Endothelial cell of umbilical vein (primary cell): ENCODE measurements at regions of chr4 and their contacts with region 1.

Region 1: GRCh38 chr4:168472920-168473319 is 7.4 kb downstream of the DDX60L start:
- DNase-seq: no peak
- H3K4me3 ChIP-seq: no peak overlapping the region
- H3K27ac ChIP-seq: no peak overlapping the region
- H3K4me1 ChIP-seq: peaks cover 7% of the 10 kb centered on the region
- H3K27me3 ChIP-seq: no peaks in the 10 kb centered on the region
- CTCF ChIP-seq: no peak
- POLR2A ChIP-seq: no peak

Region 2: DNA sequence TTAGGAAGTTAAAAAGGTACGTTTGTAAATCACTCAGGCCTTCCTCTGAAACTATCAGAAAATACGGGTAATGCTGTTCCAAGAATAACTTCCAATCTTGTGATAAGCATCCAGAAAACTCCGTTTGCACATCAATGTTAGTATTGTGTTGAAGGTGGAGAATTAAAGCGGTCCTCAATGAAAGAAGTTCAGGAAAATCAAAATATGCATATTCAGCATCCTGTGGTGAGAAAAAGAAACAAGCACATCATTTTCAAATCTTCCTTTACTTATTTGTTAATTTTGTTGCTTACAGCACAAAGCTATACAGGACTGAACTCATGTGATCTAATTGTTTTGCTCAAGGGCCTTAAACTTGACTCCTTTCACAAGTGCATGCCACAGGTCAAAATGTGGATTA is 11.1 kb before region 1 on chr4:
- CTCF ChIA-PET with region 1: no interaction called
- POLR2A ChIA-PET with region 1: no interaction called
- dilution Hi-C with region 1: no loop called
- intact Hi-C with region 1: loop called (anchors 1 kb)
- DNase-seq: peak; percentile 50
- H3K4me3 ChIP-seq: no peak overlapping the region
- H3K27ac ChIP-seq: no peak overlapping the region
- H3K4me1 ChIP-seq: peaks cover 2% of the 10 kb centered on the region
- H3K27me3 ChIP-seq: no peaks in the 10 kb centered on the region
- CTCF ChIP-seq: no peak
- POLR2A ChIP-seq: no peak